Posterior cingulate gyrus (tissue), 11 donors: ENCODE measurements at regions of chr4 and their contacts with region 1.

Region 1: GRCh38 chr4:986879-987623 is at the start of gene IDUA:
- DNase-seq: peak; percentile 80 to 98 (median 88)

Region 2: DNA sequence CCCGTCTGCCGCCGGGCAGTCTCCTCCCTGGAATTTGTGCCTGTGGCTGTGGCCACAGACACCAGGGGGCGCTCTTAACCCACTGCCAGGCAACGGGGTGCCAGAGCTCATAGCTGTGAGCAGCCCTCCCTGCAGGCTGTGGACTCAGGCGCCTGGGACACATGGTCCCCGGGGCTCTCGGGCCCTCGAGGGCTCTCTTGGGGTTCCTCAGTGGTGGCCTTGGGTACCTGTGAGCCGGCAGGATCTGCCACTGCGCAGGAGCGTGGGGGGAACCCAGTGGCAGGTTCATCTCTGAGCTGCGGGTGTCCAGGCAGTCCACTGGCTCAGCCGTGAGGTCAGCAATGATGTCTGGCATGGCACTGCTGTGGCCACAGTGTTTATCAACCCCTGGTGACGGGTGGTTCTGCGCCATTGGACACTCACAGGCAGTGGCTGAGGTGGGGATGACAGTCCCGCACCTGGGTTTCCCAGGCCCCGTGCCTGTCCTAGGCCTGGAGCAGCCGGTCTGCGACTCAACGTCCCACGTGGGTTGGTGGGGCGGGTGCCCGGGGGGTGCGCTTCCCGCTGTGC is 244.2 kb before region 1 on chr4:
- intact Hi-C with region 1: loop called (anchors 10 kb)
- DNase-seq: peak in 8 of 10 donors; percentile 60 to 94 (median 70)

Region 3: GRCh38 chr4:1171306-1172227 is 184.5 kb after region 1 on chr4:
- intact Hi-C with region 1: no loop called
- DNase-seq: peak in 3 of 10 donors; percentile 72 to 77 (median 76)